Right ventricle myocardium superior (tissue), 1 donor: ENCODE measurements at regions of chr4 and their contacts with region 1.

Region 1: GRCh38 chr4:109424093-109424841 is 9.3 kb upstream of the SEC24B start:
- DNase-seq: no peak
- ATAC-seq: no peak

Region 2: GRCh38 chr4:109658871-109659410 is 234.7 kb after region 1 on chr4:
- intact Hi-C with region 1: loop called (anchors 5 kb)
- DNase-seq: no peak
- ATAC-seq: no peak

Region 3: GRCh38 chr4:109815151-109816081 is 391.1 kb after region 1 on chr4 and contains the start of gene GAR1:
- intact Hi-C with region 1: loop called (anchors 5 kb)
- DNase-seq: peak; percentile 94
- ATAC-seq: peak; percentile 100
- total RNA-seq, gene GAR1: 7.7 TPM

Region 4: DNA sequence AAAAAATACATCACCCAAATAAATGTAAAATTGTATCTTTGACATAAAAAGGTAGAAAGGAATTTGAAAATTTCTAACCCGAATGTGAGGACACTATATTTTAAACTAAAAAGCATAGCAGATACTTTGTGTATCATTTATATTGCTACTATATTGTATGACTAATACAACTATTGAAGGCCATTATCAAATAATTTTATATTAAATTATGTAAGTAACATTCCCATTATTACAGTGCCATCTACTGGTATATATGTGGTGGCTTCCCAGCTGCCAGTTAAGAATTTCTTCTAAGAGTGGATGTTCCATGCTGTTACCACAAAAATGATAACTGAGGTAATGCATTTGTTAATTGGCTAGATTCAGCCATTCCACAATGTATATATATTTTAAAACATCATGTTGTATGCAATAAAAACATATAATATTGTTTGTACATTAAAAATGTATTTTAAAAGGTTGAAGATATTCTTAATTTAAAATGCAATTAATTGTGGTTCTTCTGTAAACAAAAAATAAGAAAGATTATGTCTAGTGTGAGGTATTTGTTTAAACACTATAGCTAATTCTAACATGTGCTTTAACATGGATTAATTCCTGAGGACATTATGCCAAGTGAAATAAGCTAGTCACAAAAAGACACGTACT is 553.7 kb after region 1 on chr4:
- intact Hi-C with region 1: loop called (anchors 5 kb)
- DNase-seq: no peak
- ATAC-seq: peak; percentile 63